Panc1 (cell line): ENCODE measurements at regions of chr1 and their contacts with region 1.

Region 1: DNA sequence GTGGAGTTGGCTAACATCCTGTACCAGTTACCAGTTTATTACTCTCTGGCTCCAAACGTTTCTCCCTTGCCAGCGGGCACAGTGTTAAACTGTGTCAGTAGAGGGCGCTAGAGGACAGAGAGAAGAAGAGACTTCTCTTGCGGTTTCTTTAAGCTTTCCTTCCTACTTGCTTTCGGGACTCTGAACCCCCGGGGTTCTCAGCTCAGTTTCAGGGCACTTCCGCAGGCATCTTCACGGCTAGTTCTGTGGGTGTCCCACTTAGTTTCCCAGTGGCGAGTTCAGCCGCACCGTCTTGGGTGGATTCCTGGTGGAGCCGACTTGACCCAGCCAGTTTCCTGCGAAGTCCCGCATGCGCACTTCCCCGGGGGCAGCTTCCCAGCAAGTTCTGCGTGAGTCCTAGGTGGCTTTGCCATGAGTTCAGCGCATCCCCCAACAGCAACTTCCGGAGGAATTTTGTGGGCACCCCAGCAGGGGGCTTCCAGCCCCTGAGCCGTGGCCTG is 37.9 kb upstream of the BTG2 start:
- DNase-seq: peak; percentile 85
- ATAC-seq: peak; percentile 87
- H3K4me3 ChIP-seq: peak overlapping the region; percentile 59 to 81
- H3K27ac ChIP-seq: peak overlapping the region; percentile 73
- H3K4me1 ChIP-seq: peaks cover 3% of the 10 kb centered on the region; the same call in 1 of the 2 replicates
- H3K27me3 ChIP-seq: no peaks in the 10 kb centered on the region
- CTCF ChIP-seq: peak; percentile 95

Region 2: DNA sequence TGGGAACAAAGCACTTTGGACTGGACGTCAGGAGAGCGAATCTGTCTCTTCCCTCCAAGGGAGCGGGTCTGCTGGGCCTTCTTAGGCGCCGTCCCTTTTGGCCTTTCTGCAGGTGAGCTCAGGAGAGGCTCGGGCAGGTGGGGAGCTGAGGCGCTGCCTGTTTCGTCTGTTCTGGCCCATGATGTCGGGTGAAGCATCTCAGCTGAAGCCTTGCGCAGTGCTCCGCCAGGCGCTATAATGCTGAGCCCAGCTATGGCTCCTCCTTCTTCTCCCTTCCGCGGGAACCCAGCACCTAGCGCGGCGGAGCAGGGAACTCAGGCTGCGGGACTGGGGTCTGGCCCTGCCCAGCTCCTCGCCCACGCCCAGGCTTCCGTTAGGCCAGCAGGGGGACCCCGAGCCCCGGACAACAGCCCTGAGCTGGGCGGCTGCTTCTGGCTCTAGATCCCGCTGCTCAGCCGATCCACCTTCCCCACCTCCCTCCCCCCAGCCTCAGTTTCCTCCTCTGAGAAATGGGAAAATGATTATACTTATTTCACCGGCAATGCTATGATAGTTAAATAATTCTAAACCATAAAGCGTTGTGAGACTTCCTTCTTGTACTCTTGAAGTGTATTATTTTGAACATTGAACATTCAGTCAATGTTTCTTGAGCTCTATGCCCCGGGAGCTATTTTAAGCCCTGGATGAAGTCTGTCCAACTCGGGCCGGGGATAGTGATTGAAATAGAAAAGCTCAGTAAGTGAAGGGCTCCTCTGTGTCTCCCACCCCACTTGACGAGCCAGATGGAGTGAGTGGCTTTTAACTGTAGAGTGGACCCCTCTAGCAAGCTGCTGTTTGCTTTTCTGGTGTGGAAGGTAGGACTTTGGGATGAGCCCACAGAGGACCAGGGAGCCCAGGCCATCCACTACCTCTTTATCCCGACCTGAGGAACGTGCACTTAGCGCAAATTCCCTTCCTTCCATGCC is 149.5 kb before region 1 on chr1:
- CTCF ChIA-PET with region 1: interaction called, 12 read pairs
- POLR2A ChIA-PET with region 1: no interaction called
- in situ Hi-C with region 1: no loop called
- intact Hi-C with region 1: no loop called
- DNase-seq: peak; percentile 10
- ATAC-seq: peak; percentile 99
- H3K4me3 ChIP-seq: peak overlapping the region in 1 of 2 experiments; percentile 35; a peak in 2 of 4 replicates
- H3K27ac ChIP-seq: no peak overlapping the region
- H3K4me1 ChIP-seq: peaks cover 2% of the 10 kb centered on the region; the same call in 1 of the 2 replicates
- H3K27me3 ChIP-seq: peaks cover 8% of the 10 kb centered on the region; the same call in 1 of the 2 replicates
- CTCF ChIP-seq: peak; percentile 91

Region 3: GRCh38 chr1:203316626-203317093 is 49.3 kb after region 1 on chr1:
- CTCF ChIA-PET with region 1: interaction called, 14 read pairs
- POLR2A ChIA-PET with region 1: no interaction called
- in situ Hi-C with region 1: no loop called
- intact Hi-C with region 1: no loop called
- DNase-seq: no peak
- ATAC-seq: peak; percentile 74
- H3K4me3 ChIP-seq: no peak overlapping the region
- H3K27ac ChIP-seq: no peak overlapping the region; the same call in 1 of the 2 replicates
- H3K4me1 ChIP-seq: no peaks in the 10 kb centered on the region; the same call in 1 of the 2 replicates
- H3K27me3 ChIP-seq: peaks cover 2% of the 10 kb centered on the region
- CTCF ChIP-seq: no peak

Region 4: GRCh38 chr1:203326830-203327683 is 59.7 kb after region 1 on chr1:
- CTCF ChIA-PET with region 1: interaction called, 13 read pairs
- POLR2A ChIA-PET with region 1: no interaction called
- in situ Hi-C with region 1: no loop called
- intact Hi-C with region 1: no loop called
- DNase-seq: peak; percentile 13
- ATAC-seq: peak; percentile 99
- H3K4me3 ChIP-seq: peak overlapping the region; percentile 50 to 65
- H3K27ac ChIP-seq: peak overlapping the region; percentile 75
- H3K4me1 ChIP-seq: peaks cover 8% of the 10 kb centered on the region
- H3K27me3 ChIP-seq: peaks cover 15% of the 10 kb centered on the region
- CTCF ChIP-seq: no peak

Region 5: GRCh38 chr1:203888807-203889251 is 621.4 kb after region 1 on chr1:
- CTCF ChIA-PET with region 1: no interaction called
- POLR2A ChIA-PET with region 1: no interaction called
- in situ Hi-C with region 1: no loop called
- intact Hi-C with region 1: no loop called
- DNase-seq: peak; percentile 56
- ATAC-seq: peak; percentile 77
- H3K4me3 ChIP-seq: no peak overlapping the region
- H3K27ac ChIP-seq: peak overlapping the region; percentile 64
- H3K4me1 ChIP-seq: peaks cover 13% of the 10 kb centered on the region
- H3K27me3 ChIP-seq: no peaks in the 10 kb centered on the region
- CTCF ChIP-seq: no peak